Mammary epithelial cell (primary cell): ENCODE measurements at regions of chr11 and their contacts with region 1.

Region 1: GRCh38 chr11:122202951-122203456 is 87.0 kb upstream of the BLID start:
- DNase-seq: peak; percentile 93
- H3K4me3 ChIP-seq: peak overlapping the region; percentile 47 to 62 (median 59)
- H3K27ac ChIP-seq: peak overlapping the region; percentile 77
- H3K4me1 ChIP-seq: peaks cover 32% of the 10 kb centered on the region
- H3K27me3 ChIP-seq: no peaks in the 10 kb centered on the region
- CTCF ChIP-seq: peak; percentile 98 to 100

Region 2: GRCh38 chr11:121451986-121452608 is 750.9 kb before region 1 on chr11 and contains the start of gene SORL1:
- CTCF ChIA-PET with region 1: no interaction called
- dilution Hi-C with region 1: no loop called
- in situ Hi-C with region 1: no loop called
- intact Hi-C with region 1: loop called (anchors 10 kb)
- DNase-seq: peak; percentile 67
- H3K4me3 ChIP-seq: peak within 1 kb of the TSS; percentile 59 to 79 (median 77)
- H3K27ac ChIP-seq: peak within 1 kb of the TSS; percentile 5
- H3K4me1 ChIP-seq: peaks cover 9% of the 10 kb centered on the region
- H3K27me3 ChIP-seq: no peaks in the 10 kb centered on the region
- CTCF ChIP-seq: peak; percentile 54 to 77
- total RNA-seq, gene SORL1: 17.5 to 84.3 TPM

Region 3: DNA sequence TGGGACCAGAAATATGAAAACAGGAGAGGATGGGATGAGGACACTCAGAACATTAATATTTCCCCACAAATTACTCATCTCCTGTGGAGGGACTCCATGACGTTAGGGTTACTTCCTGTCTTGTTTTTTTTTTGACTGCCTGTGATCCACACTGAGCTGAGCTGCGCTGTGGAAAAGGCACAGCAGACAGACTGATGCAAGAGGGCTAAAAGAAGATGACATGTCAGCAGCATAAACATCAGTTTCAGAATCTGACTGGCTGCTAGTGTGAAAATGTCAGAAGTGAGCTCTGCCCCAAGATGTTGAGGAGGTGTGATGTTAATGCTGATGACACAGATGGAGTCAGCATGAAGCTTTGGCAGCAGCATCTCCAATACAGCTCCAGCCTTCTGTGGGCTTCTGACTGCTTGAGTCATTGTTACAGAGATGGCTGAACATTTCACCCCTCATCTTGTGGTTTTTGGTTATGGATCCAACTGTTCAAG is 373.8 kb before region 1 on chr11:
- CTCF ChIA-PET with region 1: no interaction called
- dilution Hi-C with region 1: no loop called
- in situ Hi-C with region 1: no loop called
- intact Hi-C with region 1: loop called (anchors 5 kb)
- DNase-seq: peak; percentile 91
- H3K4me3 ChIP-seq: no peak overlapping the region
- H3K27ac ChIP-seq: peak overlapping the region; percentile 17
- H3K4me1 ChIP-seq: peaks cover 18% of the 10 kb centered on the region
- H3K27me3 ChIP-seq: no peaks in the 10 kb centered on the region
- CTCF ChIP-seq: no peak

Region 4: DNA sequence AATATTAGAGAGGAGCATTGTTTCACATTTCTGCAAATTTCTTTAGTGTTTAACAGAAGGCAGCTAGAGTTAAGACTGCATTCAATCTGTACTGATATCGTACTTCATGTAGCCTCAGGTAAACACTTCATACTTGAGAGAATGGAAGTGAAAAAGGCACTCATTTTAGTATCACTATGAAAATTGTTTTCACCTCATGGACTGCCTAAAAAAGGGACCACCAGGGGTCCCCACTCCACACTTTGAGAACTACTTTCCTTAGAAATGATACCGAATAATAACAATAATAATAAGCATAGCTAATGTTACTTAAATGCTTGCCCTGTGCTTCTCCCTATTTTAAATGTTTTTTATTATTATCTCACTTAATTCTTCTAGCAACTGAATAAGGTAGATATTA is 182.1 kb before region 1 on chr11:
- CTCF ChIA-PET with region 1: no interaction called
- dilution Hi-C with region 1: no loop called
- in situ Hi-C with region 1: no loop called
- intact Hi-C with region 1: loop called (anchors 1 kb)
- DNase-seq: no peak
- H3K4me3 ChIP-seq: no peak overlapping the region
- H3K27ac ChIP-seq: no peak overlapping the region
- H3K4me1 ChIP-seq: no peaks in the 10 kb centered on the region
- H3K27me3 ChIP-seq: no peaks in the 10 kb centered on the region
- CTCF ChIP-seq: peak; percentile 26 to 36

Region 5: DNA sequence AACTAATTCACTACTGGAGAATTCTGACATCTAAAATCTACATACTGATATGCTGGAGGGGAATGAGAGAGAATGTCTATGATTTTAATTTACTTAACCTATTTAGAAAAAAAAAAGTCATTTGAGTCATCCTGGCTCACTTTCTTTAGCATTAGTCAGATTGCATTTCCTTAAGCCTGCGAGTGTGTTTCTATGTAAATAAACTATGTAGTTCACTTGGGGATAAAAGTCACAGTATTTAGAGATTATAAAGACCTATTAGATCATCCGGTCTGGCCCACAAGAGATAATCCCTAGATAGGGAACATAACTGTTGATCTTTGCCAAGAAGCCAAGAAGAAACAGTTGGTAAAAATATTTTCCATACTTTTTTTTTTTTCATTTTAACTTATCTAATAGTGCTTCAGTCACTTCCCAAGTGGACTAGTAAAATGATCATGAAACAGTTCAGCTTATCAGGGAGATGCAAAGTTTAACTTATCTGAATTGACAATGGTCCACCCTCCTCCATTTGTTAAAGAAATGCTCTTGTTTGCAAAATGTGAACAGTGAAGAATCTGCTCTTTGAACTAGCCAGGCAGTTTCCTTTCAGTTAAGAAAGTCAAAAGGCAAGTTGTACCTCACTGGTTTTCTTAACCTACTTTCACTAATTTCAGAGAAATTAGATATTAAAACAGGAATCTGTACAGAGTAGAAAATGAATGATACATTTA is 65.8 kb before region 1 on chr11:
- CTCF ChIA-PET with region 1: no interaction called
- dilution Hi-C with region 1: loop called (anchors 10 kb)
- in situ Hi-C with region 1: no loop called
- intact Hi-C with region 1: loop called (anchors 2 kb)
- DNase-seq: peak; percentile 65
- H3K4me3 ChIP-seq: no peak overlapping the region
- H3K27ac ChIP-seq: peak overlapping the region; percentile 68
- H3K4me1 ChIP-seq: peaks cover 59% of the 10 kb centered on the region
- H3K27me3 ChIP-seq: no peaks in the 10 kb centered on the region
- CTCF ChIP-seq: no peak

Region 6: GRCh38 chr11:122170815-122171475 is 32.1 kb before region 1 on chr11:
- CTCF ChIA-PET with region 1: no interaction called
- dilution Hi-C with region 1: no loop called
- in situ Hi-C with region 1: no loop called
- intact Hi-C with region 1: loop called (anchors 2 kb)
- DNase-seq: peak; percentile 91
- H3K4me3 ChIP-seq: no peak overlapping the region
- H3K27ac ChIP-seq: peak overlapping the region; percentile 95
- H3K4me1 ChIP-seq: peaks cover 73% of the 10 kb centered on the region
- H3K27me3 ChIP-seq: no peaks in the 10 kb centered on the region
- CTCF ChIP-seq: no peak

Region 7: DNA sequence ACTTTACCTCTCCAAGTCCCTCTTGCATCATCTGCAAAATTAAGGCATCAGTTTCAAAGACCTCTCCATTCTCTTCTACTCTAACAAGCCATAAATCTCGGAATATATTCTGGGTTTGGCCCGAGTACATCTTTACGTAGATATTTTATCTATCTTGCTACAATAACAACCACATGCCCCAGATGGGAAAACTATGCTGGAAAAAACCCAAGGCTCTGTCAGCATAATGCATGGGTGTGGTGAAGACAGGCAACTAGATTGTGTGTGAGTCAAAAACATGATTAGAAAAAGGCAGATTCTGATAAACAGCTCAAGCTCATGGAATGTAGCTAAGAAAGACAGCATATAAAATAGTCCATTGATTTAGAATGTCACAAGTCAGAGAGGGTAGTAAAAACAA is 141.3 kb after region 1 on chr11:
- CTCF ChIA-PET with region 1: no interaction called
- dilution Hi-C with region 1: no loop called
- in situ Hi-C with region 1: no loop called
- intact Hi-C with region 1: no loop called
- DNase-seq: peak; percentile 65
- H3K4me3 ChIP-seq: no peak overlapping the region
- H3K27ac ChIP-seq: no peak overlapping the region
- H3K4me1 ChIP-seq: peaks cover 15% of the 10 kb centered on the region
- H3K27me3 ChIP-seq: peaks cover 2% of the 10 kb centered on the region
- CTCF ChIP-seq: no peak